CD8-positive, alpha-beta T cell (primary cell): ENCODE measurements at regions of chr19 and their contacts with region 1.

Region 1: DNA sequence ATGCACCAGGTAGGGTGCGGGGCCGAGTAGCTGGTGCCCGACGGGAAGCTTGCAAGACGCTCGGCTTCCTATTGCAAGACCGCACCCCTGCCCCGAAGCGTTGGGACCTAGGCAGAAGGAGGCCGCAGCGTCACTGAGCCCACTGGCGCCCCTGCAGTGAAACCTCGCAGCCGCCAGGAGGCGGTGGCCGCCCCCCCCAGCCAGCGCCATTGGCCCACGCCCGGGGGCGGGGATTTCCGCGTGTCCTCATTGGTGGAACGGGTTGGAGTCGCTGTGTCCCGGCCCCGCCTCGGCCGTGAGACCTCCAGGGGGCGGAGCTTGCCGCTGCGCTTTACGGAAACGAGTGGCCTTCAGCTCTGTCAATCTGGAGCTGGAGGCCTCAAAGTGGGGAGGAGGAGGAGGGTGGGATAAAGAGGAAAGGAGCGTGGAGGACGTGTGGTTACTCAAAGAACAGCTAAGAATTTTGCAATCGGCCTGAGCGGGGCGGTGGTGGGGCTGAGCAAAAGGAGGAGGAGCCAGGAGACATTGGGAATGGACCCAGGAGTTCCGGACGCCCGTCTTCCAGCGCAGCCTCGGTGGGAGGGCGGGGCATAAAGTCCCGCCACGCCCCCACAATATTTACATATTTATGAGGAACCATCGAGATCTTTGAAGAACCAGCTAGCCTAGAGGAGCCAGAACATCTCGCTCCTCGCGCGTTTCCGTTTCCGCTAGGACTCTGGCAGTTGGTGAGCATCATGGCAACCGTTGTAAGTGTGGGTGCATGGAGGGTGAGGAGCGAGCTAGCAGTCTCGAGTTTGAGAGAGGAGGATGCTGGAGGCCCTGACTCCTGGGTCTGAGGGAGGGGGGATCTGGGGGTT is at the starts of genes GYS1 and RUVBL2:
- DNase-seq: peak; percentile 98 to 100 (median 99)
- ATAC-seq: peak; percentile 93
- H3K4me3 ChIP-seq: peak within 1 kb of the TSS; percentile 77 to 80
- H3K4me3 Mint-ChIP-seq: peak within 1 kb of the TSS; percentile 91
- H3K27ac ChIP-seq: peak within 1 kb of the TSS; percentile 66 to 83
- H3K27ac Mint-ChIP-seq: peak within 1 kb of the TSS; percentile 93
- H3K4me1 ChIP-seq: peaks cover 22% of the 10 kb centered on the region
- H3K4me1 Mint-ChIP-seq: peaks cover 42% of the 10 kb centered on the region
- H3K27me3 ChIP-seq: no peaks in the 10 kb centered on the region
- H3K27me3 Mint-ChIP-seq: no peaks in the 10 kb centered on the region
- CTCF ChIP-seq: peak; percentile 98
- total RNA-seq, gene GYS1: 9.5 to 11.9 TPM
- total RNA-seq, gene RUVBL2: 10.5 to 11.5 TPM

Region 2: GRCh38 chr19:48321622-48322591 is 671.5 kb before region 1 on chr19:
- CTCF ChIA-PET with region 1: no interaction called
- POLR2A ChIA-PET with region 1: no interaction called
- intact Hi-C with region 1: no loop called
- DNase-seq: peak; percentile 99 to 100 (median 100)
- ATAC-seq: peak; percentile 68
- H3K4me3 ChIP-seq: peak overlapping the region; percentile 76 to 78
- H3K4me3 Mint-ChIP-seq: peak overlapping the region; percentile 94
- H3K27ac ChIP-seq: peak overlapping the region; percentile 87 to 99
- H3K27ac Mint-ChIP-seq: peak overlapping the region; percentile 100
- H3K4me1 ChIP-seq: peaks cover 54% of the 10 kb centered on the region
- H3K4me1 Mint-ChIP-seq: peaks cover 60% of the 10 kb centered on the region
- H3K27me3 ChIP-seq: no peaks in the 10 kb centered on the region
- H3K27me3 Mint-ChIP-seq: no peaks in the 10 kb centered on the region
- CTCF ChIP-seq: no peak

Region 3: GRCh38 chr19:48513289-48514122 is 479.9 kb before region 1 on chr19:
- CTCF ChIA-PET with region 1: no interaction called
- POLR2A ChIA-PET with region 1: no interaction called
- intact Hi-C with region 1: loop called in 1 of 2 experiments (anchors 10 kb)
- DNase-seq: peak in 8 of 9 experiments; percentile 61 to 88 (median 78)
- ATAC-seq: peak; percentile 58
- H3K4me3 ChIP-seq: peak overlapping the region; percentile 78 to 88
- H3K4me3 Mint-ChIP-seq: no peak overlapping the region
- H3K27ac ChIP-seq: peak overlapping the region; percentile 68 to 71
- H3K27ac Mint-ChIP-seq: peak overlapping the region; percentile 93
- H3K4me1 ChIP-seq: peaks cover 23% of the 10 kb centered on the region
- H3K4me1 Mint-ChIP-seq: peaks cover 18% of the 10 kb centered on the region
- H3K27me3 ChIP-seq: no peaks in the 10 kb centered on the region
- H3K27me3 Mint-ChIP-seq: no peaks in the 10 kb centered on the region
- CTCF ChIP-seq: no peak

Region 4: GRCh38 chr19:48746738-48747575 is 246.4 kb before region 1 on chr19 and contains the start of gene IZUMO1:
- CTCF ChIA-PET with region 1: no interaction called
- POLR2A ChIA-PET with region 1: no interaction called
- intact Hi-C with region 1: no loop called
- DNase-seq: peak in 5 of 9 experiments; percentile 37 to 72 (median 47)
- ATAC-seq: peak; percentile 75
- H3K4me3 ChIP-seq: no peak within 1 kb of the TSS
- H3K4me3 Mint-ChIP-seq: no peak within 1 kb of the TSS
- H3K27ac ChIP-seq: no peak within 1 kb of the TSS
- H3K27ac Mint-ChIP-seq: no peak within 1 kb of the TSS
- H3K4me1 ChIP-seq: peaks cover 7% of the 10 kb centered on the region
- H3K4me1 Mint-ChIP-seq: peaks cover 14% of the 10 kb centered on the region
- H3K27me3 ChIP-seq: peaks cover 0 to 5% of the 10 kb centered on the region in 2 experiments
- H3K27me3 Mint-ChIP-seq: peaks cover 18% of the 10 kb centered on the region
- CTCF ChIP-seq: no peak
- total RNA-seq, gene IZUMO1: not detected

Region 5: GRCh38 chr19:48899781-48900476 is 93.5 kb before region 1 on chr19 and contains the start of gene NUCB1:
- CTCF ChIA-PET with region 1: interaction called, 3 read pairs
- POLR2A ChIA-PET with region 1: interaction called, 5 read pairs
- intact Hi-C with region 1: loop called (anchors 1 kb)
- DNase-seq: peak; percentile 96 to 99 (median 98)
- ATAC-seq: peak; percentile 95
- H3K4me3 ChIP-seq: peak within 1 kb of the TSS; percentile 85 to 98
- H3K4me3 Mint-ChIP-seq: peak within 1 kb of the TSS; percentile 94
- H3K27ac ChIP-seq: peak within 1 kb of the TSS; percentile 77 to 78
- H3K27ac Mint-ChIP-seq: peak within 1 kb of the TSS; percentile 95
- H3K4me1 ChIP-seq: peaks cover 29% of the 10 kb centered on the region
- H3K4me1 Mint-ChIP-seq: peaks cover 30% of the 10 kb centered on the region
- H3K27me3 ChIP-seq: no peaks in the 10 kb centered on the region
- H3K27me3 Mint-ChIP-seq: peaks cover 2% of the 10 kb centered on the region
- CTCF ChIP-seq: no peak
- total RNA-seq, gene NUCB1: 55.4 to 66.7 TPM

Region 6: GRCh38 chr19:48970923-48971395 is 22.4 kb before region 1 on chr19:
- CTCF ChIA-PET with region 1: interaction called, 11 read pairs
- POLR2A ChIA-PET with region 1: interaction called, 32 read pairs
- intact Hi-C with region 1: loop called in 1 of 2 experiments (anchors 1 kb)
- DNase-seq: peak; percentile 67 to 91 (median 86)
- ATAC-seq: peak; percentile 91
- H3K4me3 ChIP-seq: no peak overlapping the region
- H3K4me3 Mint-ChIP-seq: no peak overlapping the region
- H3K27ac ChIP-seq: no peak overlapping the region
- H3K27ac Mint-ChIP-seq: no peak overlapping the region
- H3K4me1 ChIP-seq: peaks cover 10% of the 10 kb centered on the region
- H3K4me1 Mint-ChIP-seq: peaks cover 19% of the 10 kb centered on the region
- H3K27me3 ChIP-seq: no peaks in the 10 kb centered on the region
- H3K27me3 Mint-ChIP-seq: no peaks in the 10 kb centered on the region
- CTCF ChIP-seq: peak; percentile 84

Region 7: GRCh38 chr19:49085020-49085867 is 91.8 kb after region 1 on chr19 and contains the start of gene SNRNP70:
- CTCF ChIA-PET with region 1: no interaction called
- POLR2A ChIA-PET with region 1: no interaction called
- intact Hi-C with region 1: loop called (anchors 1 to 5 kb)
- DNase-seq: peak; percentile 97 to 100 (median 99)
- ATAC-seq: peak; percentile 97
- H3K4me3 ChIP-seq: peak within 1 kb of the TSS; percentile 85 to 91
- H3K4me3 Mint-ChIP-seq: peak within 1 kb of the TSS; percentile 96
- H3K27ac ChIP-seq: peak within 1 kb of the TSS; percentile 74 to 90
- H3K27ac Mint-ChIP-seq: peak within 1 kb of the TSS; percentile 96
- H3K4me1 ChIP-seq: peaks cover 33% of the 10 kb centered on the region
- H3K4me1 Mint-ChIP-seq: peaks cover 33% of the 10 kb centered on the region
- H3K27me3 ChIP-seq: no peaks in the 10 kb centered on the region
- H3K27me3 Mint-ChIP-seq: peaks cover 4% of the 10 kb centered on the region
- CTCF ChIP-seq: no peak
- total RNA-seq, gene SNRNP70: 341 to 350 TPM

Region 8: DNA sequence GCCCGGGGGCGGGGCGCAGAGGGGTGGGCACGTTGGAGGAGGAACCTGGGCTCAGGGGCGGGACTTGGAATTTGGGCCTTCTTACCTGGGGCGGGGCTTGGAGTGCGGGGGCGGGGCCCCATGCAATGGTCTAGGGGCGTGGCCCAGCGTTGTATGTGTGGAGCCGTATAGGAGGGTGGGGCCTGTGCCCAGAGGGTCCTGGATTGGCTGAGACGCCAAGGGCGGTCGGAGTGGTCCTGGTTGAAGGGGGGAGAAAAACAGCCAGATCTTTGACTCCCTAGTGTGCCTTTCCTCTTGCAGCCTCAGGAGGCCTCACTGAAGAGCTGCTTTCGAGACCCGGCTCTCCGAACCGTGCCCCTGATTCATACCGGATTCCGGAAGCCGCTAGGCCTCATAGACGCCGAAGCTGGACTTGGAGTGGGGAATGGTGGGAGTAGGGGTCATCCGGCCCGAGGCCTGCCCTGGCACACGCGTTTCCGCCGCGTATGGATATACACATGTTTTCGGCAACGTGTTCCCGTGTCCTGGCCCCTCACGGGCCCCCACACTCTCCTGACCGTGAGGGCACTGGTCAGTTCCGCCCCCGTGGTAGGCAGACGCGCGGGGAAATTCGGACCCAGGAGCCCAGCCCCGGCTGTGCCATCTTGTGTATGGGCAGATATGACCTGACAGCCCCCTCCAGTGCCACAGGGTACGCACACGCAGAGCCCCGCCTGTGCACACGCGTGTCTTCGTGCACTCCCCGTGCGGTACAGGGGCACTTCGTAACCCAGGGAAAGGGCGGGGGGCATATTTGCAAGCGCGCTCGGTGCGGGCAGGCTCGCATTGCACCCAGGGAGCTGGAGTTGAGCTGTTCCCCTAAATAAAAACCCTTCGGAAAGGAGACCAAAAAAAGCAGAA is 596.9 kb after region 1 on chr19:
- CTCF ChIA-PET with region 1: interaction called, 3 read pairs
- POLR2A ChIA-PET with region 1: no interaction called
- intact Hi-C with region 1: loop called (anchors 5 kb)
- DNase-seq: peak; percentile 90 to 98 (median 94)
- ATAC-seq: peak; percentile 77
- H3K4me3 ChIP-seq: peak overlapping the region; percentile 78 to 97
- H3K4me3 Mint-ChIP-seq: peak overlapping the region; percentile 91
- H3K27ac ChIP-seq: peak overlapping the region; percentile 82 to 83
- H3K27ac Mint-ChIP-seq: peak overlapping the region; percentile 91
- H3K4me1 ChIP-seq: peaks cover 23% of the 10 kb centered on the region
- H3K4me1 Mint-ChIP-seq: peaks cover 36% of the 10 kb centered on the region
- H3K27me3 ChIP-seq: no peaks in the 10 kb centered on the region
- H3K27me3 Mint-ChIP-seq: no peaks in the 10 kb centered on the region
- CTCF ChIP-seq: peak; percentile 29